ENCODE measurements at regions of chr20 and their contacts with region 1.

Region 1: DNA sequence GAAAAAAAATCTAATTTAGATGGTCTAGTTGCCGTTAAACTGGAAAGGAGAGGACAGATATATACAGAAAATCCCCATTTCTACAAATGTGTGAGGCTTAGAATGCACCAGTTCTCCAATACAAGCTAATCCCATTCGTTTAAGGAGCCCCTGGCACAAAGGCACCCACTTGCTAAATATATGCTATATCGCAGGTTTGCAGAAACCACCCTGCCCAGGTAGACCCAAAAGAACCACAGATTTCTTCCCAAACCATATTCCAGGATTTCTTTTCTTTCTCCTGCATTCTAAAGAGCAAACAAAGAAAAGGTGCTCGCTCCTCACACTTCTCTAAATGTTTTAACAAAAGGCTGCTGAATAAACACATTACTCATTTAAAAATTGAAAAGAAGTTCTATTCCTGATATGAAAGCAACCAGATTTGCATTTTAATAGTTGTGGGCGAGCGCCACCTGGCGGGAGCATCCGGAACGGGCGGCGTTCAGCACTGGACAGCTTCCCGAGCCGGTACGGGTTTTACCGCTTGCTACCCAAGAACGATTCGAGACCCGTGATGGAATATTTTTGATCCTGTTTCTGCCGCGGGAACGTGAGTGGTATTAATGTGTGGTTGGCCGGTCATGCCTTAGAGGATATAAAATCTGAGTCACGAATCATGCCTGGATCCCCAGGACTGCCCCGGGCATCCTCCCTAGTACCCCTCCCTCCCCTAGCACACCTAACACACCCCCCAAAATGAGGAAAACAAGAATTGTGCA is 2.1 kb downstream of the PTPRT start:
- DNase-seq: no peak
- ATAC-seq: peak; percentile 81
- H3K4me3 ChIP-seq: no peak overlapping the region
- H3K27ac ChIP-seq: no peak overlapping the region
- H3K4me1 ChIP-seq: no peaks in the 10 kb centered on the region
- H3K27me3 ChIP-seq: peaks cover 1 to 5% of the 10 kb centered on the region in 2 experiments
- CTCF ChIP-seq: peak; percentile 86 to 90 (median 87)
- EP300 ChIP-seq: no peak
- POLR2A ChIP-seq: no peak
- RAD21 ChIP-seq: peak; percentile 75

Region 2: DNA sequence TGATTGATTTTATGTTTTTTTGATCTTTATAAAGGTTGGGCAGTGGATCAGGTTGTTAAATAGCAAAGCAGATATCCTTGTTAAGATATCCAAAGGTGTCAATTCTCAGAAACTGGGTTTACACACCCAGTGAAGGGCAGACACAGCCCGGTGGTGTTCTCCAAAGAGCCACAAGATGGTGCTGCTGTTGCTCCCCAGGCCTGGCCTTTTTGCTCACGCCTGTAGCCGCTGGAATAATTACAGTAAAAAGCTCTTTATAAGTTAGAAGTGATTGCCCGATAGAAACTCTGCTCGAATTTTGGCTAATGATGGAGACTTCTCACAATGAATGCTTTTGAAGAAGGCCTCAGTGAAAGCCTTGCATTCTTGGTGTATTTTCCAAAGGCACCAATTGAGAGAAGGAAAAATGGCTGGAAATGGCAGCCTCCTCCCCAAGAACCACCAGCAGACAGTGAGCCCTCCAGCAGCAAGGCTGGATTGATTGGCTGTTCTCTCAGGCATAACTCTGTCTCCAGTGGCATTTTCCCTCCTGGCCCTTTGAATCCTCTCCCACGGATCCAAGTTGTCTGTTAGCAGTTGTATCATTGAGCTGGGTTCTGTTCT is 1449.0 kb before region 1 on chr20:
- CTCF ChIA-PET with region 1: interaction called, 6 read pairs
- POLR2A ChIA-PET with region 1: no interaction called
- RAD21 ChIA-PET with region 1: no interaction called
- SMC1A ChIA-PET with region 1: interaction called, 3 read pairs
- in situ Hi-C with region 1: loop called (anchors 10 kb)
- intact Hi-C with region 1: loop called (anchors 5 kb)
- DNase-seq: no peak
- ATAC-seq: peak; percentile 87
- H3K4me3 ChIP-seq: no peak overlapping the region
- H3K27ac ChIP-seq: no peak overlapping the region
- H3K4me1 ChIP-seq: no peaks in the 10 kb centered on the region
- H3K27me3 ChIP-seq: no peaks in the 10 kb centered on the region
- CTCF ChIP-seq: peak; percentile 79 to 89 (median 84)
- EP300 ChIP-seq: no peak
- POLR2A ChIP-seq: no peak
- RAD21 ChIP-seq: peak; percentile 84

Region 3: DNA sequence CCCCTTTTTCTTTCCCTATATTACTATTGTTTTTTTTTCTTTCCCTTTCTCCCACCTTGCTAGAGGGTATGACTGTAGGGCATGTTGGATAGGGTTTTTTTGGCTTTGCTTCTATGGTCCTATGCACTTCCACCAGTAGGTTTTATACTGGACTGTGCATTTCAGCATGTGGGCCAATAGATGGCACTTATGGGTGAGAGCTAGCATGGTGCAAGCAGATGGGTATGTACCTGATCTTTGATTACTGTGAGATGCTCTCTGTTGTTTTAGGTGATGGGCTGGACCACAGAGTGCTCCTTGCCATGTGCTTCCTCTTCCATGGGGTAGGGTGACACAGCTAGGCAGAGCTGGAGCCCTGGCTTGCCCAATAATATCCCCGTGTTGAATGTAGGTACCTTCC is 1441.0 kb before region 1 on chr20:
- CTCF ChIA-PET with region 1: no interaction called
- POLR2A ChIA-PET with region 1: no interaction called
- RAD21 ChIA-PET with region 1: no interaction called
- SMC1A ChIA-PET with region 1: no interaction called
- in situ Hi-C with region 1: loop called (anchors 10 kb)
- intact Hi-C with region 1: no loop called
- DNase-seq: no peak
- ATAC-seq: peak; percentile 25; the same call in 1 of the 3 replicates
- H3K4me3 ChIP-seq: no peak overlapping the region
- H3K27ac ChIP-seq: no peak overlapping the region
- H3K4me1 ChIP-seq: no peaks in the 10 kb centered on the region
- H3K27me3 ChIP-seq: no peaks in the 10 kb centered on the region
- CTCF ChIP-seq: 0 out of 6 replicates have a peak, but pooled peaks of 1 of the 3 experiments have one; percentile 9
- EP300 ChIP-seq: no peak
- POLR2A ChIP-seq: no peak
- RAD21 ChIP-seq: no peak

Region 4: DNA sequence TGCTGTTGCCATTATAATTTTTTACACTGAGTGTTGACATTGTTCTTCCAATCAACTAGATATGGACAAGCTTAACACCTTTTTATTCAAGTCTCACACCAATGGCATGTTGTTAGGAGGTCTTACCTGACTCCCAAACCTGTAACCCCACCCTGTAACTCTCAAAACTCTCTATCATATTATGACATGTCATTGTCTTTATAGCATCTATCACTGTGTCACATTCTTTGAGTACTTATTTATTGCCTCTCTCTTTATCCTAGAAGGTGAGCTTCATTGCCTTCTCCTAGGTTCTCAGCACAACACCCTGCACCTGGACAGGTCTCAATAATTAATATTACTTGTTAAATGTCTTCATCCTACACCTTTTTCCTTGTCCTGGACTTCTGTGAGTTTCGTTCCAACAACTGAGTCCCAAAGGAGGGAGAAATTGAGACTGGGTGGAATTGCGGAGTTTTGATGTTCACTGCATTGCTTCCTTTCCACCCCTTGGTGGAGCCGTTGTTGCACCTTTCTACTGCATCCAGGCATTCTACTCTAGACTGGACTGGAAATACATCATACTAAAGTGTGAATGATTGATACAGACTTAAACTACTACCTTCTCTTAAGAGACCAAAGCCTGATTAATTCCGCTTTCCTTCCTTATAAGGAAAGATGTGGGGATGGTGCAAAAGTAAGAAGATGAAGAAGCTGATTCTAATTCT is 1231.5 kb before region 1 on chr20:
- CTCF ChIA-PET with region 1: interaction called, 4 read pairs
- POLR2A ChIA-PET with region 1: no interaction called
- RAD21 ChIA-PET with region 1: no interaction called
- SMC1A ChIA-PET with region 1: no interaction called
- in situ Hi-C with region 1: loop called (anchors 10 kb)
- intact Hi-C with region 1: loop called (anchors 1 kb)
- DNase-seq: no peak
- ATAC-seq: peak; percentile 64
- H3K4me3 ChIP-seq: no peak overlapping the region
- H3K27ac ChIP-seq: no peak overlapping the region
- H3K4me1 ChIP-seq: no peaks in the 10 kb centered on the region
- H3K27me3 ChIP-seq: no peaks in the 10 kb centered on the region
- CTCF ChIP-seq: peak; percentile 51 to 62 (median 59)
- EP300 ChIP-seq: no peak
- POLR2A ChIP-seq: no peak
- RAD21 ChIP-seq: peak; percentile 66

Region 5: GRCh38 chr20:42191143-42191917 is 996.3 kb before region 1 on chr20:
- CTCF ChIA-PET with region 1: no interaction called
- POLR2A ChIA-PET with region 1: no interaction called
- RAD21 ChIA-PET with region 1: no interaction called
- SMC1A ChIA-PET with region 1: no interaction called
- in situ Hi-C with region 1: no loop called
- intact Hi-C with region 1: loop called (anchors 5 kb)
- DNase-seq: no peak
- ATAC-seq: no peak
- H3K4me3 ChIP-seq: no peak overlapping the region
- H3K27ac ChIP-seq: no peak overlapping the region
- H3K4me1 ChIP-seq: no peaks in the 10 kb centered on the region
- H3K27me3 ChIP-seq: no peaks in the 10 kb centered on the region; a peak in 1 of 4 replicates
- CTCF ChIP-seq: peak in 2 of 3 experiments; percentile 10 to 24; a peak in 2 of 6 replicates
- EP300 ChIP-seq: no peak
- POLR2A ChIP-seq: no peak
- RAD21 ChIP-seq: 0 out of 2 replicates have a peak, but pooled peaks have one; percentile 12

Region 6: DNA sequence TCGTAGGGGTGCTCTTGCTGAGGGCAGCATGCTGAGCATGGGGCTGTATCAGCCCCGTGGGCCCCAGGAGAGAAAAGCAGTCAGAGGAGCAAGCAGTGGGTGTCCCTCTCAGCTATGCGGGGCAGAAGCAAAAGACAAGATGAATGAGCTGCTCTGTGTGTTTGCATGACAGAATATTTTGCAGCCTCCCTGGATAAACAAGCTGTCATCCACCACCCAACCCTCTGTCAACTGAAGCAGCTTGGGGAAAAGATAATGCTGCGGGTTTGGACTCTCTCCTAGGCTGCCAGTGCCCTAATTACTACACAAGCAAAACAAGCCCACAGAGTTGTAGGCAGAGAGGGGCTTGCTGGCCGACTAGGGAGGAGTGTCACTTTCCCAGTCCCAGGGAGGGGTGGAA is 84.3 kb after region 1 on chr20:
- CTCF ChIA-PET with region 1: no interaction called
- POLR2A ChIA-PET with region 1: no interaction called
- RAD21 ChIA-PET with region 1: no interaction called
- SMC1A ChIA-PET with region 1: no interaction called
- in situ Hi-C with region 1: no loop called
- intact Hi-C with region 1: no loop called
- DNase-seq: no peak
- ATAC-seq: no peak
- H3K4me3 ChIP-seq: no peak overlapping the region
- H3K27ac ChIP-seq: no peak overlapping the region
- H3K4me1 ChIP-seq: no peaks in the 10 kb centered on the region
- H3K27me3 ChIP-seq: peaks cover 0 to 2% of the 10 kb centered on the region in 2 experiments; a peak in 2 of 4 replicates
- CTCF ChIP-seq: no peak
- EP300 ChIP-seq: no peak
- POLR2A ChIP-seq: no peak
- RAD21 ChIP-seq: no peak

Region 7: GRCh38 chr20:43408848-43409576 is 221.4 kb after region 1 on chr20:
- CTCF ChIA-PET with region 1: no interaction called
- POLR2A ChIA-PET with region 1: no interaction called
- RAD21 ChIA-PET with region 1: interaction called, 3 read pairs
- SMC1A ChIA-PET with region 1: no interaction called
- in situ Hi-C with region 1: no loop called
- intact Hi-C with region 1: loop called (anchors 10 kb)
- DNase-seq: peak; percentile 7
- ATAC-seq: peak; percentile 46; the same call in 2 of the 3 replicates
- H3K4me3 ChIP-seq: no peak overlapping the region
- H3K27ac ChIP-seq: no peak overlapping the region
- H3K4me1 ChIP-seq: no peaks in the 10 kb centered on the region
- H3K27me3 ChIP-seq: no peaks in the 10 kb centered on the region
- CTCF ChIP-seq: peak; percentile 59 to 63 (median 62); a peak in 5 of 6 replicates
- EP300 ChIP-seq: no peak
- POLR2A ChIP-seq: no peak
- RAD21 ChIP-seq: peak; percentile 75

Measured in GM12878 (cell line).